IMR-90 (cell line): ENCODE measurements at regions of chr2 and their contacts with region 1.

Region 1: DNA sequence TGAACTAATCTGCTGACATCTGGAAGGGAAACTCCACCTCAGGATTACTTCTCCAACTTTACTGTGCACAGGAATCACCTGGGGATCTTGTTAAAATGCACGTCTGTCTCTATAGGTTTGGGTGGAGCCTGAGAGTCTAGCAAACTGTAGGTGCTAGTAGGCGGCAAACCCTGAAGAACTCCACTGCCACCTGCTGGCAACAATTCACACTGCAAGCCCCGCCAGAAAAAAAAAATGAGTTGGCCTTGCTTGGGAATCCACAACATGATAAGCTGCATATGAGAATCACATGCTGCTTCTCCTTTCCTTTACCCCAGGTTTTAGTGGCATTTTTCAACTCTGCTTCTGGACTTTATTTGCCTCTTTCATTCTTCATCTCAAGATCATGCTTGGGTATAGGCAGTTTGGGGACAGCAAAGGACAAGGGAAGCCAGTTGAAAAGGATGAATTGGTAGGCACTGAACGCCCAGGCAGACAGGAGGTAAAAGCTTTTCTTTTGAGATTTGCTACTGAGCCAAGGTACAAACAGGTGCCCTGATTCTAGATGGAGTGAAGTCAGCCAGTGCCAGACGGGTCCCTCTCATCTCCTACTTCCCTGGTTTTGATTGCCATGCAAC is 88.8 kb downstream of the VIT start:
- DNase-seq: peak; percentile 57
- ATAC-seq: peak; percentile 93
- H3K4me3 ChIP-seq: no peak overlapping the region
- H3K27ac ChIP-seq: no peak overlapping the region
- H3K4me1 ChIP-seq: no peaks in the 10 kb centered on the region
- H3K27me3 ChIP-seq: peaks cover 32% of the 10 kb centered on the region
- CTCF ChIP-seq: peak; percentile 94
- POLR2A ChIP-seq: no peak
- RAD21 ChIP-seq: peak; percentile 78

Region 2: GRCh38 chr2:35973132-35973736 is 812.1 kb before region 1 on chr2:
- CTCF ChIA-PET with region 1: no interaction called
- POLR2A ChIA-PET with region 1: no interaction called
- dilution Hi-C with region 1: no loop called
- in situ Hi-C with region 1: no loop called
- intact Hi-C with region 1: loop called (anchors 5 kb)
- DNase-seq: peak; percentile 42
- ATAC-seq: peak; percentile 79; the same call in 1 of the 2 replicates
- H3K4me3 ChIP-seq: no peak overlapping the region
- H3K27ac ChIP-seq: no peak overlapping the region
- H3K4me1 ChIP-seq: no peaks in the 10 kb centered on the region
- H3K27me3 ChIP-seq: no peaks in the 10 kb centered on the region
- CTCF ChIP-seq: peak; percentile 60
- POLR2A ChIP-seq: no peak
- RAD21 ChIP-seq: peak; percentile 71

Region 3: GRCh38 chr2:36507408-36507812 is 277.9 kb before region 1 on chr2:
- CTCF ChIA-PET with region 1: interaction called, 4 read pairs
- POLR2A ChIA-PET with region 1: no interaction called
- dilution Hi-C with region 1: no loop called
- in situ Hi-C with region 1: no loop called
- intact Hi-C with region 1: loop called (anchors 10 kb)
- DNase-seq: peak; percentile 65
- ATAC-seq: peak; percentile 94
- H3K4me3 ChIP-seq: no peak overlapping the region
- H3K27ac ChIP-seq: no peak overlapping the region
- H3K4me1 ChIP-seq: peaks cover 2% of the 10 kb centered on the region
- H3K27me3 ChIP-seq: no peaks in the 10 kb centered on the region
- CTCF ChIP-seq: peak; percentile 69
- POLR2A ChIP-seq: no peak
- RAD21 ChIP-seq: peak; percentile 79

Region 4: GRCh38 chr2:36775261-36775660 is 10.0 kb before region 1 on chr2:
- CTCF ChIA-PET with region 1: interaction called, 11 read pairs
- POLR2A ChIA-PET with region 1: no interaction called
- dilution Hi-C with region 1: no loop called
- in situ Hi-C with region 1: no loop called
- intact Hi-C with region 1: no loop called
- DNase-seq: no peak
- ATAC-seq: no peak
- H3K4me3 ChIP-seq: no peak overlapping the region
- H3K27ac ChIP-seq: no peak overlapping the region
- H3K4me1 ChIP-seq: no peaks in the 10 kb centered on the region
- H3K27me3 ChIP-seq: peaks cover 26% of the 10 kb centered on the region
- CTCF ChIP-seq: no peak
- POLR2A ChIP-seq: no peak
- RAD21 ChIP-seq: no peak

Region 5: GRCh38 chr2:36835125-36835524 is 49.8 kb after region 1 on chr2:
- CTCF ChIA-PET with region 1: no interaction called
- POLR2A ChIA-PET with region 1: no interaction called
- dilution Hi-C with region 1: no loop called
- in situ Hi-C with region 1: no loop called
- intact Hi-C with region 1: no loop called
- DNase-seq: no peak
- ATAC-seq: no peak
- H3K4me3 ChIP-seq: no peak overlapping the region
- H3K27ac ChIP-seq: no peak overlapping the region
- H3K4me1 ChIP-seq: no peaks in the 10 kb centered on the region
- H3K27me3 ChIP-seq: no peaks in the 10 kb centered on the region
- CTCF ChIP-seq: no peak
- POLR2A ChIP-seq: no peak
- RAD21 ChIP-seq: no peak

Region 6: GRCh38 chr2:36918307-36918706 is 133.0 kb after region 1 on chr2:
- CTCF ChIA-PET with region 1: no interaction called
- POLR2A ChIA-PET with region 1: no interaction called
- dilution Hi-C with region 1: no loop called
- in situ Hi-C with region 1: loop called (anchors 10 kb)
- intact Hi-C with region 1: loop called (anchors 5 kb)
- DNase-seq: peak; percentile 10
- ATAC-seq: no peak
- H3K4me3 ChIP-seq: no peak overlapping the region
- H3K27ac ChIP-seq: no peak overlapping the region
- H3K4me1 ChIP-seq: no peaks in the 10 kb centered on the region
- H3K27me3 ChIP-seq: no peaks in the 10 kb centered on the region
- CTCF ChIP-seq: peak; percentile 45
- POLR2A ChIP-seq: no peak
- RAD21 ChIP-seq: peak; percentile 41; the same call in 1 of the 2 replicates

Region 7: DNA sequence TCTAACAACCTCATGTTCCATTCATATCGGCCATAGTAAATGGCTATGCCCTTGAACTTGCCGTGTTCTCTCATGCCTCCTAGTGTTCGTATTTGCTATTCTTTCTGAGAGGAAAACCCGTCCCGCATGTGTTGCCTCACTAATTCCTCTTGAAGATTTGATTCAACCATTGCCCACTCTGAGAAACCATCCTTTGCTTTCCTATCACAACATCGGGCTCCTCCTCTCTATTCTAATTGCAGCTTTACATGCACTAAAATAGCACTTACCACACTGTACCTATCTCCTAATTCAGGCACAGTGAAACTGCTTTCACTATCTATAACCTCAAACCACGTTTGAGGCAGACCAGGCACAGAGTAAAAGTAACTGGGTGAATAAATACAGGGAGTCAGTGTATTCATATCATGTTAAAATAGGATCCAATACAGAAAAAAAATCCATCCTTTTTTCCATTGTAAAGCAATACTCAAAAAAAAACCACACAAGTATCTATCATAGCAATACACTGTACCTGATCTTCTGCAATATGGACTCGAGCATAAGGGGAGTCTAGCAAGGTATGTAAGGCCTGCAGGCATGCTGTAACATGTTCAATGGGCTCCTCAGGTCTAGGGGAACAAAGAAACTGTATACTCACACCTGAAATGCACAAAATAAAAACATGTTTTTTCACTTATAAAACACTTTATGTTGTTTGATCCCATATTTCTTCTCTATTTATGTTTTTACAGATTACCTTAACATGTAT is 220.0 kb after region 1 on chr2:
- CTCF ChIA-PET with region 1: no interaction called
- POLR2A ChIA-PET with region 1: no interaction called
- dilution Hi-C with region 1: no loop called
- in situ Hi-C with region 1: loop called (anchors 10 kb)
- intact Hi-C with region 1: loop called (anchors 5 kb)
- DNase-seq: peak; percentile 23
- ATAC-seq: no peak
- H3K4me3 ChIP-seq: no peak overlapping the region
- H3K27ac ChIP-seq: no peak overlapping the region
- H3K4me1 ChIP-seq: peaks cover 2% of the 10 kb centered on the region; the same call in 1 of the 2 replicates
- H3K27me3 ChIP-seq: no peaks in the 10 kb centered on the region
- CTCF ChIP-seq: 0 out of 2 replicates have a peak, but pooled peaks have one; percentile 21
- POLR2A ChIP-seq: no peak
- RAD21 ChIP-seq: peak; percentile 36